Left cardiac atrium (tissue), 4 donors: ENCODE measurements at regions of chr9 and their contacts with region 1.

Region 1: DNA sequence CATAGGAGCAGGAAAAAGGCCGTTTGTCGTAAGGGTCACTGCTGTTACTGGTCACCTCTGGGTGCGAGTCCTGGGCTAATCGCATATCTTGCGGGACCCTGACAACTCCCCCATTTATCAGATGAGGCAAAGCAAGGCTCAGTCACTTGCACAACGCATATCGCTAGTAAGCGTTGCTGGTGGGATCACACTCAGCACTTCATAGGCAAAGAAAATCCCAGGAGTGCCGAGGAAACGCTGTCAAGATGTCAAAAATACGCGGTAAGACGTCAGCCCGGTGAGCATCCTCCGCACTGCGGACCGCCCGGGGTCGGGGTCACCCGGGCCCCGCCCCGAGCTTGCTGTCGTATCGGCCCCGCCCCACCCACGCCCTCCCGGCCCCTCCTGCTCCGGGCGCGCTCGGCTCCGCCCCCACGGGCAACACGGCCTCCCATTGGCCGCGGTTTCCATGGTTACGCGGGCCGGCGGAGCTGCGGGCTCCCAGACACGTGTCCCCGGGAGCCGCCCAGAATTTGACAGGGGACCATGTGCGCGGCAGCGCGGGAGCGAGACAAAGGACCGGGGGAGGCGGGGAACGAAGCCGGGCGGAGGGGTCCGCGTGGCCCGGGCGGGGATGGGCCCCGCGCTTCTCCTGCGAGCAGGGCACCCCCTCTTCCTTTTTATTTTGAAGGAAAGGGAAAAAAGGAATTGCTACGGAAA is 80.2 kb upstream of the IER5L start:
- DNase-seq: peak; percentile 96
- ATAC-seq: peak; percentile 90 to 93

Region 2: GRCh38 chr9:129320575-129321263 is 62.4 kb after region 1 on chr9:
- intact Hi-C with region 1: loop called in 1 of 2 experiments (anchors 10 kb)
- DNase-seq: peak; percentile 67
- ATAC-seq: peak; percentile 76 to 85